CD8-positive, alpha-beta T cell (primary cell): ENCODE measurements at regions of chr19 and their contacts with region 1.

Region 1: DNA sequence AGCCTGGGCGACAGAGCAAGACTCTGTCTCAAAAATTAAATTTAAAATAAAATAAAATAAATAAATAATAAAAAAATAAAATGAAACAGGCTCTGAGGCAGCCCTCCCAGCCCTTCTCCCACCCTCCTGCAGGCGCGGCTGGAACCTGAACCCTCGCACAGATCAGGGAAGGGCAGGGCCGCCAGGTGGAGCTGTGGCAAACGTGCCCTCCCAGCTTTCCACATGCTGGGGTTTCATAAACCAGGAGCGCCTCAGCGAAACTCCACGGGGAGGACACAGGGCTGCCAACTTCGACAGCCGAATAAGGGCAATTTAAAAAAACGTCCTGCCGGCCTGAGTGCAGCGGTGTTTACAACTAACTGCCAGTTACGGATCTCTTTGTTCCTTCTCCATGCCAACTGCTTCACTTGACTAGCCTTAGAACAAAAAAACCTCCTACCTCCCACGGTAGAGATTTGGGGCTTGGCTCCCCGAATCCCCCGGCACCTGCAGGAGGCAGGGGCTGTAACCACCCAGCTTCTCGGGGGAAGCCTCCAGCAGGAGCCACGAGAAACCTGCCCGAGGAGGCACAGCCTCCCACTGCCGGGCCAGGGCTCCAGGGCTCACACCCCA is 15.9 kb downstream of the ZNF787 start:
- DNase-seq: peak; percentile 13 to 70 (median 56)
- ATAC-seq: peak; percentile 77
- H3K4me3 ChIP-seq: no peak overlapping the region
- H3K4me3 Mint-ChIP-seq: peak overlapping the region; percentile 37
- H3K27ac ChIP-seq: no peak overlapping the region
- H3K27ac Mint-ChIP-seq: peak overlapping the region; percentile 57
- H3K4me1 ChIP-seq: peaks cover 11% of the 10 kb centered on the region
- H3K4me1 Mint-ChIP-seq: peaks cover 38% of the 10 kb centered on the region
- H3K27me3 ChIP-seq: no peaks in the 10 kb centered on the region
- H3K27me3 Mint-ChIP-seq: no peaks in the 10 kb centered on the region
- CTCF ChIP-seq: peak; percentile 68

Region 2: GRCh38 chr19:56080669-56081401 is 24.4 kb before region 1 on chr19:
- CTCF ChIA-PET with region 1: no interaction called
- POLR2A ChIA-PET with region 1: no interaction called
- intact Hi-C with region 1: no loop called
- DNase-seq: peak; percentile 46 to 77 (median 67)
- ATAC-seq: peak; percentile 67
- H3K4me3 ChIP-seq: peak overlapping the region; percentile 41 to 46
- H3K4me3 Mint-ChIP-seq: peak overlapping the region; percentile 76
- H3K27ac ChIP-seq: no peak overlapping the region
- H3K27ac Mint-ChIP-seq: no peak overlapping the region
- H3K4me1 ChIP-seq: peaks cover 8% of the 10 kb centered on the region
- H3K4me1 Mint-ChIP-seq: peaks cover 9% of the 10 kb centered on the region
- H3K27me3 ChIP-seq: no peaks in the 10 kb centered on the region
- H3K27me3 Mint-ChIP-seq: peaks cover 12% of the 10 kb centered on the region
- CTCF ChIP-seq: no peak

Region 3: GRCh38 chr19:56126973-56127780 is 22.0 kb after region 1 on chr19:
- CTCF ChIA-PET with region 1: no interaction called
- POLR2A ChIA-PET with region 1: no interaction called
- intact Hi-C with region 1: no loop called
- DNase-seq: no peak
- ATAC-seq: no peak
- H3K4me3 ChIP-seq: no peak overlapping the region
- H3K4me3 Mint-ChIP-seq: no peak overlapping the region
- H3K27ac ChIP-seq: no peak overlapping the region
- H3K27ac Mint-ChIP-seq: no peak overlapping the region
- H3K4me1 ChIP-seq: peaks cover 13% of the 10 kb centered on the region
- H3K4me1 Mint-ChIP-seq: peaks cover 12% of the 10 kb centered on the region
- H3K27me3 ChIP-seq: no peaks in the 10 kb centered on the region
- H3K27me3 Mint-ChIP-seq: no peaks in the 10 kb centered on the region
- CTCF ChIP-seq: no peak

Region 4: DNA sequence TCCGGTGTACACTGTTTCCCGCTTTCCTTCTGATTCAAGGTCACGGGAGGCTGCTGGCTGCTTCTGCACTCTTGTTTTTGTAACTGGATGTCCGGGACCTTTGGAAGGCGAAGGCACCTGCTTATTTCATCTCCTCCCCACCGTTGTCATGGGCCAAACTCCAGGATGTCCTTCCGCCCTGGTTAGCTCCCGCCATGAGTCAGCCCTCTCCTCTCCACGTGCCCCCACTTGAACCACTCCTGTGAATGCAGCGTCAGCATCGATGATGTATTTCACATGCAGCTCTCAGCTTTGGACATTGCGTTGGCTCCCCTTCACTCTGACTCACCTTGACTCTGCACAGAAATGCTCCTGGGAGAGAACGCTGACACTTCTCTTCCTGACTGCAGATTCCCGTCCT is 65.1 kb after region 1 on chr19:
- CTCF ChIA-PET with region 1: interaction called, 12 read pairs
- POLR2A ChIA-PET with region 1: no interaction called
- intact Hi-C with region 1: loop called (anchors 1 kb)
- DNase-seq: no peak
- ATAC-seq: no peak
- H3K4me3 ChIP-seq: no peak overlapping the region
- H3K4me3 Mint-ChIP-seq: no peak overlapping the region
- H3K27ac ChIP-seq: no peak overlapping the region
- H3K27ac Mint-ChIP-seq: no peak overlapping the region
- H3K4me1 ChIP-seq: no peaks in the 10 kb centered on the region
- H3K4me1 Mint-ChIP-seq: peaks cover 2% of the 10 kb centered on the region
- H3K27me3 ChIP-seq: no peaks in the 10 kb centered on the region
- H3K27me3 Mint-ChIP-seq: peaks cover 8% of the 10 kb centered on the region
- CTCF ChIP-seq: no peak

Region 5: GRCh38 chr19:56177564-56178243 is 72.5 kb after region 1 on chr19:
- CTCF ChIA-PET with region 1: interaction called, 12 read pairs
- POLR2A ChIA-PET with region 1: no interaction called
- intact Hi-C with region 1: loop called (anchors 1 kb)
- DNase-seq: no peak
- ATAC-seq: no peak
- H3K4me3 ChIP-seq: no peak overlapping the region
- H3K4me3 Mint-ChIP-seq: no peak overlapping the region
- H3K27ac ChIP-seq: no peak overlapping the region
- H3K27ac Mint-ChIP-seq: no peak overlapping the region
- H3K4me1 ChIP-seq: no peaks in the 10 kb centered on the region
- H3K4me1 Mint-ChIP-seq: no peaks in the 10 kb centered on the region
- H3K27me3 ChIP-seq: no peaks in the 10 kb centered on the region
- H3K27me3 Mint-ChIP-seq: peaks cover 6% of the 10 kb centered on the region
- CTCF ChIP-seq: no peak